ENCODE measurements at regions of chr5 and their contacts with region 1.

Region 1: DNA sequence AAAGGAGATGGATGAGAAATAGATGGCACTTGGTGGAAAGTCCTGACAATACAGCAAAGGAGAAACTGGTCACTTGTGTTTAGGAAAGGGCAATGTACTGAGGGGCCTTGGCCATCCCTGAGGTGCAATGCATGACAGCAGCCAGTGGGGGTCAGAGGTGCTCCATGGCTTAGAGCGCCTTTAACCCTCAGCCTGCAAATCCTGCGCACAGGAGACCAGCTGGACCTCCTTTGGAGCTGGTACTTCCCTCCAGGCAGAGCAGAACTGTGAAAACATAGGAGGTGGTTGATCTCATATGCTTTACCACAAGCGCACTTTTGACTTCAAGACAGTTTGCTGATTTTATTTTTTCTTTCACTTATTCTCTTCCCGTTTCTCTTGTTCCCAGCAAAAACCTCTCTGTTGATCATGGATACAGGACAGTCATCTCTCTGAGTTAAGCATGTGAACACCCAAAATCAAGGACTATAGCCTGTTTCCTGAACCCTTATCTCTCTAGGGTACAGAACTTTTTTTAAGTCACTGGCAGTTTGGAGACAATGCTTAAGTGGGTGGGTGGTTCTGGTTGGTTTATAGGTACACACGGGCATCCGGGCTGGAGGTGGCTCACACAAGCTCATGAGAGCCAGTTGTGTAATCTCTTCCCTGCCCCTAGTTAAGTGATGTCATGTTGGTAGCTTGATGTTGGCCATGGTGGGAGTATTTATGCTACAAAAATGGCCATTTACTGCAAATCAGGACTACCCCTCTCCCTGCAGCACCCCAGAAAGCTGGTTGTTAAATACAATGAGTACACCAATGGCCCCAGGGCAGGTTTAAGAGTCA is 37.6 kb upstream of the ANKRD55 start:
- DNase-seq: peak; percentile 71
- H3K4me3 ChIP-seq: no peak overlapping the region
- H3K27ac ChIP-seq: no peak overlapping the region
- H3K4me1 ChIP-seq: peaks cover 13% of the 10 kb centered on the region
- H3K27me3 ChIP-seq: no peaks in the 10 kb centered on the region
- CTCF ChIP-seq: peak; percentile 99 to 100

Region 2: DNA sequence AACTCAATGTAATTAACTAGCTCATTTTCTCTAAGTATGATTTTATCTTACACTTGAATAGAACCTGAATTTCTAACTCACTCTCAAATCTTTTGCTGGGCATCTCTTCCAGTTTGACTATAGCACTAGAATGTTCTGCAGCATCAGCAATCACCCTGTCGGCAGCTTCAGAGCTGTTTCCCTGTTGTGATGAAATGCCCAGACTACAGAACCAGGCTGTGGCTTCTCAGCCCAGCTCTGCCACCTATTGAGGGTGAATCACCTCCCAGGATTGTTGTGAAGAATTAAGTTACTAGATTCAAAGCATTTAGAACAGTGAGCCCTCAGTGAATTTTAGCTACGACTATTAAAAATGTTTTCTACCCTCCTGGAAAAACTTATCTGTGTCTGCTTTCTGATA is 52.7 kb after region 1 on chr5:
- CTCF ChIA-PET with region 1: no interaction called
- dilution Hi-C with region 1: no loop called
- in situ Hi-C with region 1: no loop called
- intact Hi-C with region 1: loop called (anchors 1 kb)
- DNase-seq: peak; percentile 84
- H3K4me3 ChIP-seq: no peak overlapping the region
- H3K27ac ChIP-seq: no peak overlapping the region
- H3K4me1 ChIP-seq: peaks cover 22% of the 10 kb centered on the region
- H3K27me3 ChIP-seq: no peaks in the 10 kb centered on the region
- CTCF ChIP-seq: peak in 1 of 2 donors; percentile 37

Region 3: DNA sequence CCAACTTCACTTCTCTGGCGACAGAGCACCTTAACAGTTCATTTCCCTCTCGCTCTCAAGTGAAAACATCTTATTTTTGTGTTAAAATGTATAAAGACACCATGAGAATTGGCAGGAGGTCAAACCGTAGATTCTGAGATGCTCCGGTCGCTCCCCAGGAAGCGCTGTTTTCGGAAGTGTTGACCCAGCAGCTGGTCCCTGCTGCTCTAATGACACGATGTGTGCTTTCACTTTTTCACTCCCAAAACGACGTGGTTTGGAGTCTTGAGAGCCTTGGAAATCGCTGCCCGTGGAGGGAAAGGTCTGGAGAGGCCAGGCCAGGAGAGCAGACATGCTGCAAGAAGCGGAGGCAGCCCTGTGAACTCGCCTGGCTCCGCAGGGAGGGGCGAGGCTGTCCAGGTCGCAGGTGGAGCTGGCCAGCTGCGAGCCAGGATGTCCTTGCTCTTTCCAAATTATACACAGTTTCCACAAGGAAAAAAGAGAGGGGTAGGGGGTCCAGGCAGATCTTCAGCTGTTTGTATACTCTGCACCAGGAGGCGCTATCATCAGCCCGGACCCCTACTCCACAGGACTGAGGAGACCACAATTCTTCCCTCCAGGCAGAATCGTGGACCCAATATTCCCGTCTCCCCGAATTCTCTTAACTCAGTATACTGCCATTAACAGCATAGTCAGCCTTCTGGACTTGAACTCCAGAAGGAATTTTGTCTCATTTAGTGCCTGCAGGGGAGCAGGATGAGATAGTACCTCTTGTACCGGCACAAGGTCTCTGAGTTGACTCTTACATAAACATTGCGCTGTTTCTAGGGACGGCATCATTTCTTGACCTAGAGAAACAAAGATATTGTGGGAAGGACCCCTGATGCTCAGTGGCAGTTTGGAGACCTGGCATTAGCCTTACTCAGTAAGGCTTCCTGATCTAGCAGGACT is 210.9 kb after region 1 on chr5:
- CTCF ChIA-PET with region 1: no interaction called
- dilution Hi-C with region 1: no loop called
- in situ Hi-C with region 1: no loop called
- intact Hi-C with region 1: loop called (anchors 5 kb)
- DNase-seq: peak; percentile 11
- H3K4me3 ChIP-seq: peak overlapping the region; percentile 47 to 57 (median 48)
- H3K27ac ChIP-seq: no peak overlapping the region
- H3K4me1 ChIP-seq: peaks cover 12% of the 10 kb centered on the region
- H3K27me3 ChIP-seq: no peaks in the 10 kb centered on the region
- CTCF ChIP-seq: peak in 1 of 2 donors; percentile 22

Region 4: DNA sequence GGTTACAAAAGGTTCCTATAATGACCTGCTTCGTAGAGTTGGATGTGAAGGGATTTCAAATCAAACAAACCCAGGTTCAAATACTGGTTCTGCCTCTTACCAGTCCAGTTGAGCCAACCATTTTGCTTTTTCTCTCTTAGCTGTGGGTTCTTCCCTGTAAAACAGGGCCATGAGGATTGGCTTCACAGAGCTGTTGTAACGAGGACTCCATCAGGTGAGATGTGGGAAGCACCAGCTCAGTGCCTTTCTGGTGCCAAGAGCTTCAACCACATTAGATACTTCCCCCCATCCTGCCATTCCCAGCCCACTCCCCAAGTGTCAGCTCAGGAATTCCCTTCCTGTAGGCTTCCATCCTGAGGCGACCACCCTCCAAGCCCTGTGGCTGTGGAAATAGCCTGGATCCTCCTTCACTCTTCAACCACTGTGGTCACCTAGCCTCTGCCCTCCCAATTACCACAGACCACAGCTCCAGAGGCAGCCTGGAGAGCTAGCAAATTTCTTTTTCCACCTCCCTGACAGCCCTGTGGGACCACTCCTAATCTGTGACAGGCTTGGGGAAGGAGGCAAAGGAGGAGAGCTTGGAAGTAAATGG is 324.7 kb after region 1 on chr5:
- CTCF ChIA-PET with region 1: no interaction called
- dilution Hi-C with region 1: no loop called
- in situ Hi-C with region 1: no loop called
- intact Hi-C with region 1: loop called (anchors 1 kb)
- DNase-seq: peak; percentile 8
- H3K4me3 ChIP-seq: no peak overlapping the region
- H3K27ac ChIP-seq: no peak overlapping the region
- H3K4me1 ChIP-seq: no peaks in the 10 kb centered on the region
- H3K27me3 ChIP-seq: no peaks in the 10 kb centered on the region
- CTCF ChIP-seq: peak in 1 of 2 donors; percentile 18

Region 5: GRCh38 chr5:56900858-56901578 is 630.2 kb after region 1 on chr5:
- CTCF ChIA-PET with region 1: interaction called, 3 read pairs
- dilution Hi-C with region 1: no loop called
- in situ Hi-C with region 1: no loop called
- intact Hi-C with region 1: loop called (anchors 1 kb)
- DNase-seq: peak; percentile 39
- H3K4me3 ChIP-seq: no peak overlapping the region
- H3K27ac ChIP-seq: no peak overlapping the region
- H3K4me1 ChIP-seq: peaks cover 8% of the 10 kb centered on the region
- H3K27me3 ChIP-seq: no peaks in the 10 kb centered on the region
- CTCF ChIP-seq: peak; percentile 62 to 79

Region 6: DNA sequence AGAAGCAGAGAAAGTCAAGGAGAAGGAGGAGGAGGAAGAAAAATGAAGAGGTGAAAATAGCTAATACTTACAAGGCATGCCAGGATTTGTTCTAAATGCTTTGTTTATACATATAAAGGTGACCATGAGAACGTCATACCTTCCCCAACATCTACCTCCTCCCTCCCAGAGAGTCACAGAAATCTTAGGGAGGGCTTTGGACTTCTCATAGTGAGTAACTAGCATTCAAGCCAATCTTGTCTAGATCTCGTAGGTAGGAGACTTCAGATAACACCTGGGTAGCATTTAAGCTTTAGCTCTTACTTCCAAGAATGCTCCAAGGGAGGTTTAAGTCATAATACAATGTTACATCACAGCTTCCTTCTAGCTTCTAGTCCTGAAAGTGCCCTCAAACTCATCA is 866.6 kb after region 1 on chr5:
- CTCF ChIA-PET with region 1: no interaction called
- dilution Hi-C with region 1: no loop called
- in situ Hi-C with region 1: loop called in 1 of 2 experiments (anchors 25 kb)
- intact Hi-C with region 1: loop called (anchors 1 kb)
- DNase-seq: peak; percentile 58
- H3K4me3 ChIP-seq: no peak overlapping the region
- H3K27ac ChIP-seq: no peak overlapping the region
- H3K4me1 ChIP-seq: no peaks in the 10 kb centered on the region
- H3K27me3 ChIP-seq: no peaks in the 10 kb centered on the region
- CTCF ChIP-seq: no peak

Region 7: GRCh38 chr5:57277085-57277484 is 1006.3 kb after region 1 on chr5:
- CTCF ChIA-PET with region 1: no interaction called
- dilution Hi-C with region 1: no loop called
- in situ Hi-C with region 1: loop called (anchors 25 kb)
- intact Hi-C with region 1: loop called (anchors 1 kb)
- DNase-seq: no peak
- H3K4me3 ChIP-seq: no peak overlapping the region
- H3K27ac ChIP-seq: no peak overlapping the region
- H3K4me1 ChIP-seq: no peaks in the 10 kb centered on the region
- H3K27me3 ChIP-seq: no peaks in the 10 kb centered on the region
- CTCF ChIP-seq: peak; percentile 18 to 38

Measured in mammary epithelial cell (primary cell).